Activated CD4-positive, alpha-beta memory T cell treated with anti-CD3 and anti-CD28 coated beads, Interleukin-2, amount 10 ng/mL, durations not matched to agents 7 days and 5 days (primary cell): ENCODE measurements at regions of chr19 and their contacts with region 1.

Region 1: GRCh38 chr19:2648528-2648937 is 54.0 kb downstream of the GNG7 start:
- DNase-seq: peak; percentile 76
- H3K4me3 Mint-ChIP-seq: no peak overlapping the region
- H3K27ac Mint-ChIP-seq: no peak overlapping the region
- H3K4me1 Mint-ChIP-seq: no peaks in the 10 kb centered on the region
- H3K27me3 Mint-ChIP-seq: peaks cover 5% of the 10 kb centered on the region

Region 2: GRCh38 chr19:2524838-2525723 is 123.5 kb before region 1 on chr19:
- CTCF ChIA-PET with region 1: no interaction called
- POLR2A ChIA-PET with region 1: no interaction called
- DNase-seq: no peak
- H3K4me3 Mint-ChIP-seq: no peak overlapping the region
- H3K27ac Mint-ChIP-seq: no peak overlapping the region
- H3K4me1 Mint-ChIP-seq: no peaks in the 10 kb centered on the region
- H3K27me3 Mint-ChIP-seq: no peaks in the 10 kb centered on the region

Region 3: GRCh38 chr19:2661615-2662014 is 13.1 kb after region 1 on chr19:
- CTCF ChIA-PET with region 1: interaction called, 24 read pairs
- POLR2A ChIA-PET with region 1: no interaction called
- DNase-seq: peak; percentile 24
- H3K4me3 Mint-ChIP-seq: no peak overlapping the region
- H3K27ac Mint-ChIP-seq: no peak overlapping the region
- H3K4me1 Mint-ChIP-seq: no peaks in the 10 kb centered on the region
- H3K27me3 Mint-ChIP-seq: no peaks in the 10 kb centered on the region

Region 4: DNA sequence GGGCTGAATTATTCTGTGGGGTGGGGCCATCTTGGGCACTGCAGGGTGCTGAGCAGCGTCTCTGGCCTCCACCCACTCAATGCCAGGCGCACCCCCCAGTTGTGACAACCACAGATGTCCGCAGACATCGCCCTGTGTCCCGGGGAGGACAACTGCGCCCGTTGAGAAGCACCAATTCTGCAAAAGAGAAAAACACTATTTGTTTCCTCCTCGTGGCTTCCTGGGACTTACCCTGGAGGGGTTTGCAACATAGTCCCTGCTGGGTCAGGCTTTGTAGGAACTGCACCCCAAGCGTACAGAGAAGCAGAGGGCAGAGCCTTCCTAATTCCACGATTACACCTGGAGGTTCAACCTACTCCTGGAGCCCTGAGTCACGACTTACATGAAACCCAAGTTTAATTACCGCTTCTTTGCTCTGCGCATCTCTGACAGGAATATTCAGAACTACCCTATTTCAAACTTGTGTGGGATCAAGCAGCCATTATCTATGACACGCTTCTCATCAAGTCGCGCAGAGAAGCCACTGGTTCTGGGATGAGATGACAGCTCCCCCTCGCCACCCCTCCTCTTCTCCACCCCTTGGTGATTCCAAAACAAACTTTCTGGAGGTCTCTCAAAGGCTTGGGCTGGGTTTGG is 102.4 kb after region 1 on chr19:
- CTCF ChIA-PET with region 1: interaction called, 70 read pairs
- POLR2A ChIA-PET with region 1: interaction called, 3 read pairs
- DNase-seq: no peak
- H3K4me3 Mint-ChIP-seq: no peak overlapping the region
- H3K27ac Mint-ChIP-seq: no peak overlapping the region
- H3K4me1 Mint-ChIP-seq: peaks cover 1% of the 10 kb centered on the region
- H3K27me3 Mint-ChIP-seq: no peaks in the 10 kb centered on the region